ENCODE measurements at regions of chr6 and their contacts with region 1.

Region 1: DNA sequence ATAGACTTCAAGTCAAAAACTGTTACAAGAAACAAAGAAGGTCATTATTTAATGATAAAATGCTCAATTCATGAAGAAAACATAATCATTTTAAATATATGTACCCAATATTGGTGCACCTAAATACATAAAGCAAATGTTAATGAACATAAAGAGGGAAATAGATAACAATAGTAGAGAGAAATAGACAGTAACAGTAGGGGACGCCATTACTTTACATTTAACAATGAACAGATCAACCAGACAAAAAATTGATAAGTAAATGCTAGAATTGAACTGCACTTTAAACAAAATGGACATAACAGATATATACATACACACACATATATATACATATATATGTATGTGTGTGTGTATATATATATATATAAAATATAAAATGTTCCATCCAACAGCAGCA is 37.4 kb downstream of the IL22RA2 start:
- DNase-seq: no peak
- ATAC-seq: no peak
- H3K4me3 ChIP-seq: no peak overlapping the region
- H3K27ac ChIP-seq: no peak overlapping the region
- H3K4me1 ChIP-seq: no peaks in the 10 kb centered on the region
- H3K27me3 ChIP-seq: no peaks in the 10 kb centered on the region
- CTCF ChIP-seq: no peak
- EP300 ChIP-seq: no peak
- POLR2A ChIP-seq: no peak
- RAD21 ChIP-seq: no peak

Region 2: GRCh38 chr6:136969433-136969832 is 166.6 kb before region 1 on chr6:
- CTCF ChIA-PET with region 1: no interaction called
- POLR2A ChIA-PET with region 1: no interaction called
- RAD21 ChIA-PET with region 1: no interaction called
- SMC1A ChIA-PET with region 1: no interaction called
- in situ Hi-C with region 1: no loop called
- intact Hi-C with region 1: no loop called
- DNase-seq: no peak
- ATAC-seq: no peak
- H3K4me3 ChIP-seq: no peak overlapping the region
- H3K27ac ChIP-seq: no peak overlapping the region
- H3K4me1 ChIP-seq: no peaks in the 10 kb centered on the region
- H3K27me3 ChIP-seq: no peaks in the 10 kb centered on the region
- CTCF ChIP-seq: no peak
- EP300 ChIP-seq: no peak
- POLR2A ChIP-seq: no peak
- RAD21 ChIP-seq: no peak

Region 3: DNA sequence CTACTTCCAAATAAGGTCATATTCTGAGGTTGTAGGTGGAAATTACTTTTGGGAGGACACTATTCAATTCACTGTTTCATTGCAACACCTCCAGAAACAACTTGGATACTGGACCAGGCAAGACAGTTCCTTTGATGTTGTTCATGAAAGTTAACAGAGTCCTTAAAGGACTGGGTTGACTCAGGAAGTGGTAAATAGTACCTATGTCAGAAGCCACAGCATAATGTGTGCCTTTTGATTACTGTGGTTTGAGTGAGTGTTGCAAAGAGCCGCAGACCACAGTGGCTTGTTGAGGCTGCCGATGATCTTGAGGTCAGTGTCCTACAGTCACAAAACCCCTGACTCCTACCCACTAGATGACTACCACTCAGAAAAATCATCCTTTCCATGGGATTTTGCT is 102.2 kb before region 1 on chr6:
- CTCF ChIA-PET with region 1: no interaction called
- POLR2A ChIA-PET with region 1: no interaction called
- RAD21 ChIA-PET with region 1: no interaction called
- SMC1A ChIA-PET with region 1: no interaction called
- in situ Hi-C with region 1: no loop called
- intact Hi-C with region 1: no loop called
- DNase-seq: peak; percentile 76
- ATAC-seq: peak; percentile 99
- H3K4me3 ChIP-seq: no peak overlapping the region
- H3K27ac ChIP-seq: no peak overlapping the region
- H3K4me1 ChIP-seq: no peaks in the 10 kb centered on the region
- H3K27me3 ChIP-seq: no peaks in the 10 kb centered on the region; a peak in 1 of 4 replicates
- CTCF ChIP-seq: no peak
- EP300 ChIP-seq: peak; percentile 83; a peak in 3 of 4 replicates
- POLR2A ChIP-seq: no peak
- RAD21 ChIP-seq: no peak

Region 4: GRCh38 chr6:137112067-137112355 is 24.1 kb before region 1 on chr6:
- CTCF ChIA-PET with region 1: interaction called, 3 read pairs
- POLR2A ChIA-PET with region 1: interaction called, 3 read pairs
- RAD21 ChIA-PET with region 1: interaction called, 3 read pairs
- SMC1A ChIA-PET with region 1: interaction called, 13 read pairs
- in situ Hi-C with region 1: no loop called
- intact Hi-C with region 1: no loop called
- DNase-seq: no peak
- ATAC-seq: no peak; the same call in 2 of the 3 replicates
- H3K4me3 ChIP-seq: no peak overlapping the region
- H3K27ac ChIP-seq: no peak overlapping the region
- H3K4me1 ChIP-seq: peaks cover 14% of the 10 kb centered on the region
- H3K27me3 ChIP-seq: no peaks in the 10 kb centered on the region
- CTCF ChIP-seq: no peak
- EP300 ChIP-seq: no peak
- POLR2A ChIP-seq: no peak
- RAD21 ChIP-seq: no peak

Region 5: DNA sequence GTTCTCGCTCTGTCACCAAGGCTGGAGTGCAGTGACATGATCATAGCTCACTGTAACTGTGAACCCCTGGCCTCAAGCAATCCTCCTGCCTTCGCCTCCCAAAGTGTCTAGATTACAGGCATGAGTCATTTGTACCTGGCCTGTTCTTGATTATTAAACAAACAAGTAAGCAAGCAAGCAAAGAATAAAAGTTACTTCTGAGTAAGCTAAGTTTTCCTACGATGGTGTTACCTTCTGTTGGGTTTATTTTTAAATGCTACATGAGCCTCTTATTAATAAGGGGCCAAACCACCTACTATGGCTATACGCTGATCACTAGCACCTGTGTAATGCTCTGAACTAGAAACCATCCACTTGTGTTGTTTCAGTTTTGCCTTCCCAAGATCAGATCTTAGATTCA is 13.5 kb before region 1 on chr6:
- CTCF ChIA-PET with region 1: interaction called, 6 read pairs
- POLR2A ChIA-PET with region 1: interaction called, 6 read pairs
- RAD21 ChIA-PET with region 1: no interaction called
- SMC1A ChIA-PET with region 1: interaction called, 10 read pairs
- in situ Hi-C with region 1: no loop called
- intact Hi-C with region 1: no loop called
- DNase-seq: no peak
- ATAC-seq: peak; percentile 74
- H3K4me3 ChIP-seq: no peak overlapping the region
- H3K27ac ChIP-seq: peak overlapping the region; percentile 91
- H3K4me1 ChIP-seq: peaks cover 35% of the 10 kb centered on the region
- H3K27me3 ChIP-seq: no peaks in the 10 kb centered on the region
- CTCF ChIP-seq: no peak
- EP300 ChIP-seq: no peak
- POLR2A ChIP-seq: no peak
- RAD21 ChIP-seq: peak; percentile 12; the same call in 1 of the 2 replicates

Measured in GM12878 (cell line).